Pancreas (tissue), 10 donors: ENCODE measurements at regions of chr11 and their contacts with region 1.

Region 1: DNA sequence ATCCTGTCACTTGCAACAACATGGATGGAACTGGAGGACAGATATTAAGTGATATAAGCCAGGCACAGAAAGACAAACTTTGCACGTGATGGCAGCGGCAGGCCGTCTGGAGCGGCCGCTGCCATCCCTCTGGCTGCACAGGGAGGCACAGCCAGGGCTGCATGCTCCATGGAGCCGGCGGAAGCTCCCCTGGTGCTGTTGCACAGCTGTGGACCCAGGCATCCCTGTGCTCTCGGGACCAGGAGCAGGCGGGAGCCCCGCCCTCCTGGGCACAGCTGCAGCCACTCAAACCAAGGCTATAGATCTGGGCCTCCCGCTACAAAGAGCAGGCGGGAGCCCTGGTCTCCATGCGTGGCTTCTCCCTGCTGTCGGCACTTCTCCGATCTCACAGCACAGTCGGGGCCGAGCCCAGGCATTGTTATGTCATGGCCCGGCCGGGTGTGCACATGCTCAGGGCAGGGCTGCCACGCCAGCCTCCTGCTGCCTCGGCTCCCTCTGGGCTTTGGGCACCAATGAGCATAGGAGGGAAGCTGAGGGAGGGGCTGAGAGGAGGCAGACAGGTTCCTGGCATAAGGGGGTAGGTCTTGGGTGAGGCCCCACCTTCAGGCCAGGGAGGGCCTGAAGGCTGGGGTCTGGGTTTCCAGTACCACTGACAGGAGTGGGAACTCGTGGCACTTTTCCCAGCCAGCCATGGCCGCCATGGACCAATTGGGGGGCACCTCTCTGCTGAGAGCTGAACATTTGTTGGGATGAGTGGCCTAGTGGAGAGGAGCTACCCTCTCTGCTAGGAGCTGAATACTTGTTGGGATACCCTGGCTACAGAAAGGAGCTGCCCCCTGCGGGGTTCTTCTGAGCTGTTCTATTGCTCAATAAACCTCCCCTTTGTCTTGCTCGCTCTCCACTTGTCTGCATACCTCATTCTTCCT is 16.7 kb downstream of the RRP8 start:
- DNase-seq: no peak
- ATAC-seq: no peak
- H3K4me3 ChIP-seq: no peak overlapping the region
- H3K27ac ChIP-seq: no peak overlapping the region
- H3K4me1 ChIP-seq: no peaks in the 10 kb centered on the region
- H3K27me3 ChIP-seq: no peaks in the 10 kb centered on the region
- CTCF ChIP-seq: no peak

Region 2: GRCh38 chr11:6544921-6545850 is 41.5 kb before region 1 on chr11:
- intact Hi-C with region 1: loop called in 1 of 3 experiments (anchors 5 kb)
- DNase-seq: peak in 4 of 6 donors; percentile 37 to 72 (median 68)
- ATAC-seq: peak; percentile 82 to 94 (median 86)
- H3K4me3 ChIP-seq: no peak overlapping the region
- H3K27ac ChIP-seq: no peak overlapping the region
- H3K4me1 ChIP-seq: peaks cover 0 to 4% (median 3%) of the 10 kb centered on the region in 3 donors
- H3K27me3 ChIP-seq: no peaks in the 10 kb centered on the region
- CTCF ChIP-seq: no peak

Region 3: GRCh38 chr11:6693342-6694228 is 106.9 kb after region 1 on chr11:
- intact Hi-C with region 1: no loop called
- DNase-seq: no peak
- ATAC-seq: peak; percentile 21 to 54 (median 32)
- H3K4me3 ChIP-seq: no peak overlapping the region
- H3K27ac ChIP-seq: no peak overlapping the region
- H3K4me1 ChIP-seq: no peaks in the 10 kb centered on the region
- H3K27me3 ChIP-seq: no peaks in the 10 kb centered on the region
- CTCF ChIP-seq: no peak